Calu3 (cell line): ENCODE measurements at regions of chr19 and their contacts with region 1.

Region 1: DNA sequence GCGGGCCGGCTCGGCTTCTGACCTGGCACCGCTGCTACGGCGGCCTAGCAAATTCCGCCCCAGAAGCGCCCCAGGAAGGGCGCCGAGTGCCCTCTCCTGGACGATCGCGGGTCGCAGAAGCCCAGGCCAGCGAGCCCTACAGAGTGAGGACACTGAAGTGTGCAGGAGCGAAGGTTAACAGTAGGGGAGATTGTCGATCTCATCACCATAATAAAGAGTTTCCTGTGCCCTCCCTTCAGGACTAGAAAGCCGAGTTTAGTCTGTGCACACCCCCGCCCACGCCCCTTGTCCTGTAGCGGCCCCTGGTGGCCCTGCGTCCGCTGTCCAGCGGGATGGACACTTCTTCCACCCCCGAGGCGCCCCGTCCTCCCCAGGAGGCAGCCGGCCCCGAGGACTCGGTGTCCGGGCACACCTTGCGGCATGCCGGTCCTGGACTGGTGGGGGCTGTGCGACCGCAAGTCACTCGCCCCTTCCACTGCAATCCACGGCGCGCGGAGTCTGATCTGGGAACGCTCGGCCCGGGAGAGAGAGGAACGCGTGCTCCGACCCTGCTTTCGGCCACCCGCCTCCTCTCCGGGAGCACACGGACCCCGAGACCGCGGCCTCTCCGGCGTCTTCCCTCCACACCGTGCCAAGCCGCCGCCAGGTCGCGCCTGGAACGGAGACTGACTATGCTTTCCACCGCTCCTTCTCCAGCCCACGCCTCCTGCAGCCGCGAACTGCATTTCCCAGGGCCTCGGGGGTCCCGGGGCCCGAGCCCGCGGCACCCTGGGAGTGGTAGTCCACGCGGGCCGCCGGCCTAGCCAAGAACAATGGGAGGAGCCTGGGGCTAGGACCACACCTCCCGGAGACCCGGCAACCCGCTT is 769 bp upstream of the KMT2B start:
- DNase-seq: peak; percentile 96
- H3K4me3 Mint-ChIP-seq: peak overlapping the region; percentile 77
- H3K27ac Mint-ChIP-seq: peak overlapping the region; percentile 45
- H3K4me1 Mint-ChIP-seq: peaks cover 30% of the 10 kb centered on the region
- H3K27me3 Mint-ChIP-seq: peaks cover 25% of the 10 kb centered on the region
- CTCF ChIP-seq: peak; percentile 97

Region 2: GRCh38 chr19:35555301-35556005 is 161.6 kb before region 1 on chr19:
- CTCF ChIA-PET with region 1: no interaction called
- intact Hi-C with region 1: loop called (anchors 2 kb)
- DNase-seq: peak; percentile 71
- H3K4me3 Mint-ChIP-seq: no peak overlapping the region
- H3K27ac Mint-ChIP-seq: no peak overlapping the region
- H3K4me1 Mint-ChIP-seq: no peaks in the 10 kb centered on the region
- H3K27me3 Mint-ChIP-seq: peaks cover 67% of the 10 kb centered on the region
- CTCF ChIP-seq: peak; percentile 77

Region 3: GRCh38 chr19:35609851-35610353 is 107.1 kb before region 1 on chr19:
- CTCF ChIA-PET with region 1: no interaction called
- intact Hi-C with region 1: loop called (anchors 1 kb)
- DNase-seq: no peak
- H3K4me3 Mint-ChIP-seq: no peak overlapping the region
- H3K27ac Mint-ChIP-seq: no peak overlapping the region
- H3K4me1 Mint-ChIP-seq: peaks cover 2% of the 10 kb centered on the region
- H3K27me3 Mint-ChIP-seq: no peaks in the 10 kb centered on the region
- CTCF ChIP-seq: no peak

Region 4: GRCh38 chr19:35657904-35658700 is 58.9 kb before region 1 on chr19:
- CTCF ChIA-PET with region 1: no interaction called
- intact Hi-C with region 1: no loop called
- DNase-seq: no peak
- H3K4me3 Mint-ChIP-seq: no peak overlapping the region
- H3K27ac Mint-ChIP-seq: no peak overlapping the region
- H3K4me1 Mint-ChIP-seq: no peaks in the 10 kb centered on the region
- H3K27me3 Mint-ChIP-seq: no peaks in the 10 kb centered on the region
- CTCF ChIP-seq: peak; percentile 41

Region 5: DNA sequence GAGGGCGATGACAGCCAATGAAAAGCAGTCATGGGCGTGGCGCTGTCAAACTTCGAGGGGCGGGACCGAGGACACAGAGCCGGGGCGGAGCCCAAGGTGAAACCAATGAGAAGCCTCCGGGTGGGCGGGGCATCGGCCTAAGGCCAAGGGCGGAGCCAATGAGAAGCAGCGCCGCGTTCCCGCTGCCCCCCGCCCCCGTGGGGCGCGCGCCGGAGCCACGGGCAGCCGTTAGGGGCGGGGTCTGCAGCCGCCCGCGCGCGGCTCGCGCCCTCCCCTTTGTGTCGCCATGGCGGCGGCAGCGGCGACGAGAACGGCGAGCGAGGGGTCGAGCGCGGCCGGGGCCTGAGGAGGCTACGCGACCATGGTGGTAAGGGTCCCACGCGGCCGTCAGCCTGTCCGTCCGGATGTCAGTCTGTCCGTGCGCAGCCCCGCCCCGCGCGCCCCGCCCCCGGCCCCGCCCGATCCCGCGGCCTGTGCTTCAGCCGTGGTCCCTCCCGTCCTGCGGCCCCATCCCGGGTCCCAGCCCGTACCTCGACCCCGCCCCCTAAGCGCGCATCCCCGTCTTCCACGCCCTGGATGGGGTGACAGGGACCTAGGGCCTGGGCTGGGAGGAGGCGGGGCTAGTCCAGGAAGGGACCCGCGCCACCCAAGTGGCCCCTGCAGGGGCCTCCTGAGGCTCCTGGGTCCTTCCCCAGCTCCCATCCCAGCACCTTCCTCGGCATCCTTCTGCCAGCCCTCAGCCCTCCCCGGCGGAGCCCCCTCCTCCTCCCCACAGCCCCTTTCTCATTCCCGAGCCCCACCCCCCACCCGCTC is 58.5 kb after region 1 on chr19 and contains the start of gene ARHGAP33:
- CTCF ChIA-PET with region 1: no interaction called
- intact Hi-C with region 1: no loop called
- DNase-seq: peak; percentile 100
- H3K4me3 Mint-ChIP-seq: peak within 1 kb of the TSS; percentile 69
- H3K27ac Mint-ChIP-seq: peak within 1 kb of the TSS; percentile 55
- H3K4me1 Mint-ChIP-seq: peaks cover 13% of the 10 kb centered on the region
- H3K27me3 Mint-ChIP-seq: no peaks in the 10 kb centered on the region
- CTCF ChIP-seq: no peak
- total RNA-seq, gene ARHGAP33: 16.8 and 27.0 TPM in 2 replicates

Region 6: DNA sequence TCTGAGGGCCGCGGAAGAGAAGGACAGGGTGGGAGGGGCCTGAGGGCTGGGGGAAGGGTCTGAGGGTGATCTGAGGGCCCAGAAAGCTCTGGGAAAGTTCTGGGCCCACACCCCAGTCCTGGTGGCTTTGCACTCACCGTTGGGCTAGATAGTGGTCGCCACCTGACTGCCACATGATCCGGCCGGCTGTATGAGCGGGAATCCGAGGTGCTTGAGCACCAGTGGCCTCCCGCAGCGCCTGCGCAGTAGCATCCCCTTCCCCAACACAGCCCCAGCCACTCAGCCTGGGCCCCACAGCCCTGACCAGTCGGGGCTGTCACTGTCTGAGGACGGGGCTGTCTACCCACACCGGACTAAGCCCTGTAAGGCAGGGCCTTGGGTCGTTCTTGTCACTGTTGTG is 80.6 kb after region 1 on chr19:
- CTCF ChIA-PET with region 1: no interaction called
- intact Hi-C with region 1: no loop called
- DNase-seq: no peak
- H3K4me3 Mint-ChIP-seq: no peak overlapping the region
- H3K27ac Mint-ChIP-seq: no peak overlapping the region
- H3K4me1 Mint-ChIP-seq: peaks cover 8% of the 10 kb centered on the region
- H3K27me3 Mint-ChIP-seq: peaks cover 20% of the 10 kb centered on the region
- CTCF ChIP-seq: no peak